Thyroid gland (tissue), 4 donors: ENCODE measurements at regions of chr17 and their contacts with region 1.

Region 1: DNA sequence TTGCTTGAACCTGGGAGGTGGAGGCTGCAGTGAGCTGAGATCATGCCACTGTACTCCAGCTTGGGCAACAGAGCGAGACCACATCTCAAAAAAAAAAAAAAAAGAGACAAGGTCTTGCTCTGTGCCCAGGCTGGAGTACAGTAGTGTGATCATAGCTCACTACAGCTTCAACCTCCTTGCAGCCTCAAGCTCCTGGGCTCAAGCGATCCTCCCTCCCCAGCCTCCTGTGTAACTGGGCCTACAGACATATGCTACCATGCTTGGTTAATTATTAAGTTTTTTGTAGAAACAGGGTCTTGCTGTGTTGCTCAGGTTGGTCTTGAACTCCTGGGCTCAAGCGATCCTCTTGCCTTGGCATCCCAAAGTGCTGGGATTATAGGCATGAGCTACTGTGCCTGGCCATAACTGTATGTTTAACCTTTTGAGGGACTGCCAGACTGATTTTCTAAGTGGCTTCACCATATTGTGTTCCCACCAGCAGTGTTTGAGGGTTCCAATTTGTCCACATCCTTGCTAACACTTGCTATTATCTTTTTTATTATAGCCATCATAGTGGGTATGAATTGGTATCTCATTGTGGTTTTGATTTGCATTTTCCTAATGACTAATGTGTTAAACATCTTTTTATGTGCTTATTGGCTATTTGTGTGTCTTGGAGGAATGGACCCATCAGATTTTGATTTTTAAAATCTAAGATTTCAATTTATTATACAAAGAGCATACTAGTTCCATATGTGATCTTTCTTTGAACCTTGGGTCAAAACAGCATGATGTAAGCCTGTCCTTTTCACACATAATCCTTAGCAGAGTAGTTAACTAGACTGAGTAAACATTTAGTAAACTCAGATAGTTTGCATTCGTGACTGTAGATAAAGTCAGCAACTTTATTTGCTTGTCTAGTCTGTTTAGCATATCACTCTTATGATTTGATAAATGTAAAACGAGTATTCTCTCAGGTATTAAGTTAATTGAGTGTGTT is 38.1 kb upstream of the KPNB1 start:
- DNase-seq: no peak
- H3K4me3 ChIP-seq: no peak overlapping the region
- H3K27ac ChIP-seq: no peak overlapping the region
- H3K4me1 ChIP-seq: no peaks in the 10 kb centered on the region
- H3K27me3 ChIP-seq: no peaks in the 10 kb centered on the region
- CTCF ChIP-seq: no peak
- POLR2A ChIP-seq: no peak

Region 2: DNA sequence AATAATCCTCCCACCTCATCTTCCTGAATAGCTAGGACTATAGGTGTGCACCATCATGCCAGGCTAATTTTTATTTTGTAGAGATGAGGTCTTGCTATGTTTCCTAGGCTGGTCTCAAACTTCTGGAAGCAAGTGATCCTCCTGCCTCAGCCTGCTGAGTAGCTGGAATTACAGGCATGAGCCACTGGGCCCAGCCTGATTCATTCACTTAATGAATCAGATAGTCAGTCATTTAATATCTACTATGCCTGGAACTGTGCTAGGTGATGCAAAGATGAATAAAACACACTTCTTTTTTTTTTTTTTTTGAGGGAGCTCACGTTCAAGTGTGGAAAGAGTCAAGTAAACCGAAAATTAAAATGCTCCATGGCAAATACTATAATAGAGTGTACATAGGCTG is 248.5 kb before region 1 on chr17:
- intact Hi-C with region 1: loop called (anchors 5 kb)
- DNase-seq: no peak
- H3K4me3 ChIP-seq: no peak overlapping the region
- H3K27ac ChIP-seq: no peak overlapping the region
- H3K4me1 ChIP-seq: peaks cover 4 to 10% of the 10 kb centered on the region in 2 donors
- H3K27me3 ChIP-seq: no peaks in the 10 kb centered on the region
- CTCF ChIP-seq: no peak
- POLR2A ChIP-seq: no peak

Region 3: GRCh38 chr17:47821424-47822391 is 210.0 kb after region 1 on chr17 and contains the start of gene OSBPL7:
- intact Hi-C with region 1: no loop called
- DNase-seq: peak; percentile 72 to 73
- H3K4me3 ChIP-seq: peak within 1 kb of the TSS; percentile 8 to 38 (median 38)
- H3K27ac ChIP-seq: peak within 1 kb of the TSS in 2 of 3 donors; percentile 25 to 40
- H3K4me1 ChIP-seq: peaks cover 7 to 20% of the 10 kb centered on the region in 2 donors
- H3K27me3 ChIP-seq: no peaks in the 10 kb centered on the region
- CTCF ChIP-seq: peak in 1 of 6 experiments; percentile 33
- POLR2A ChIP-seq: peak in 1 of 2 donors; percentile 43
- total RNA-seq, gene OSBPL7: 12.7 to 18.0 (median 14.7) TPM